Activated T-helper 1 cell treated with anti-CD3 and anti-CD28 coated beads, Interleukin-12 subunit alpha, Interleukin-12 subunit beta, Interleukin-2, Interleukin-4 antibody, amounts not matched to agents 30 ng/mL and 10 ng/mL and 1 ng/mL, durations not matched to agents 14 hours and 24 hours and 36 hours (primary cell): ENCODE measurements at regions of chr17 and their contacts with region 1.

Region 1: GRCh38 chr17:51260125-51260880 is at the start of gene UTP18:
- DNase-seq: peak; percentile 93
- H3K4me3 Mint-ChIP-seq: peak within 1 kb of the TSS; percentile 88
- H3K27ac Mint-ChIP-seq: peak within 1 kb of the TSS; percentile 97
- H3K4me1 Mint-ChIP-seq: peaks cover 60% of the 10 kb centered on the region
- H3K27me3 Mint-ChIP-seq: no peaks in the 10 kb centered on the region
- total RNA-seq, gene UTP18: 89.7 and 95.6 TPM in 2 replicates

Region 2: GRCh38 chr17:49677933-49678847 is 1582.1 kb before region 1 on chr17 and contains the start of gene SPOP:
- intact Hi-C with region 1: loop called (anchors 5 kb)
- DNase-seq: peak; percentile 99
- H3K4me3 Mint-ChIP-seq: peak within 1 kb of the TSS; percentile 91
- H3K27ac Mint-ChIP-seq: peak within 1 kb of the TSS; percentile 99
- H3K4me1 Mint-ChIP-seq: peaks cover 41% of the 10 kb centered on the region
- H3K27me3 Mint-ChIP-seq: peaks cover 5% of the 10 kb centered on the region
- total RNA-seq, gene SPOP: 58.3 and 61.9 TPM in 2 replicates

Region 3: DNA sequence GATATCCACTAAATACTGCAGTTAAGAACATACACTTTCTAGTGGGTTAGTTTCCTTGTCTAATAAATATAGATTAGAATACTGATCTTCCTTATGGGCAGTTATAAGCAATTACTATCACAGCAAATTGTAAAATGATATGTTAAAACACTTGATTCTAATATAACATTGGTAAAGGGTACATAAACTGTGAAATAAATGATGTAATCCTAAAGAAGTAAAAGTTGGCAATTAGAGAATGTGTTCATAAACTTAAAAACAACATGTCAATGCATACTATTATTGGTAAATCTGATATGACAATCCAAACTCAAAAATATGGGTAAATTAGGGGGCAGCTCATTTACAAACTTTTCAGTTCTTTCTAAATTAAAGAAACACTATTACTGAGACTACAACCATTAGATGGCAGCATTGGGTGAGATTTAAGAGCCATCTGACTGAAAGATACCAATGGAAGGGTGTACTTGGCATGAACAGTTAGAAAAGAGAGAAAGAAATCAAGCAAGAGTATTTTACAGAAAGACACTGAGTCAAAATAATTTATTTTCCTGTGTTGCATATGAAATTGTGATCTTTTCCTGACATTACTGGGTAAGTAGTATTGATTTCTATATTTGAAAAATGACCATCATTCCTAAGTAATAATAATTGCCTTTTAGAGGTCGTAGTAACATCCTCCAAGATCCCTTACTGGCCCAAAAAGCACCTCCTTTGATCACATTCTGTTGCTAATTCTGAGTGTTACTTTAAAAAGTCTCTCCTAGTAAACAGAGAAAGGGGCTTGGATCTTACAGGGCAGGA is 259.3 kb before region 1 on chr17:
- intact Hi-C with region 1: loop called (anchors 5 kb)
- DNase-seq: no peak
- H3K4me3 Mint-ChIP-seq: no peak overlapping the region
- H3K27ac Mint-ChIP-seq: no peak overlapping the region
- H3K4me1 Mint-ChIP-seq: peaks cover 7% of the 10 kb centered on the region
- H3K27me3 Mint-ChIP-seq: no peaks in the 10 kb centered on the region

Region 4: DNA sequence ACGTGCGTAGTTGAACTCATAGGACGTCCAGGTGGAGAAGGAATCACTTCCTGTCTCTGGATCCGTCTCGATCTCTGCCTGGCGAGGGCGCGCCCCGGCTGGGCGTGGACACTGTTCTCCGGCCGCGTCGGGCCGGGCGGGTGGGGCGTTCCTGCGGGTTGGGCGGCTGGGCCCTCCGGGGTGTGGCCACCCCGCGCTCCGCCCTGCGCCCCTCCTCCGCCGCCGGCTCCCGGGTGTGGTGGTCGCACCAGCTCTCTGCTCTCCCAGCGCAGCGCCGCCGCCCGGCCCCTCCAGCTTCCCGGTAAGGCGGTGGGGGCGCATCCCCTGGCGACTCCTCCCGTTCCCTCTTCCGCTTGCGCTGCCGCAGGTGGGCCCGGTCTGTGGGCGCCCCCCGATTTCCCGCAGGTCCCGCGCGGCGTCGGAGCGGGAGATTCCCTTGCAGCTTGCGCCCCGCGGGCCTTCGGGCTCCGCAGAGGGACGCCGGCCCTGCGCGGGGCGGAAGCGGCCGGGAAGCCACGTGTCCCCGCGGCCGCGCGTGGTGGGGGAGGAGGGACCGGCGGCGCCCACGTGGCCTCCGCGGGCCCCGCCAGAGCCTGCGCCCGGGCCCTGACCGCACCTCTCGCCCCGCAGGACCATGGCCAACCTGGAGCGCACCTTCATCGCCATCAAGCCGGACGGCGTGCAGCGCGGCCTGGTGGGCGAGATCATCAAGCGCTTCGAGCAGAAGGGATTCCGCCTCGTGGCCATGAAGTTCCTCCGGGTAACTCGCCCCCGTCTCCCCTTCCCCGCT is 93.9 kb before region 1 on chr17 and contains the start of gene NME2:
- intact Hi-C with region 1: loop called (anchors 1 kb)
- DNase-seq: peak; percentile 69
- H3K4me3 Mint-ChIP-seq: peak within 1 kb of the TSS; percentile 98
- H3K27ac Mint-ChIP-seq: peak within 1 kb of the TSS; percentile 98
- H3K4me1 Mint-ChIP-seq: peaks cover 32% of the 10 kb centered on the region
- H3K27me3 Mint-ChIP-seq: peaks cover 1% of the 10 kb centered on the region
- total RNA-seq, gene NME2: 664 and 674 TPM in 2 replicates

Region 5: DNA sequence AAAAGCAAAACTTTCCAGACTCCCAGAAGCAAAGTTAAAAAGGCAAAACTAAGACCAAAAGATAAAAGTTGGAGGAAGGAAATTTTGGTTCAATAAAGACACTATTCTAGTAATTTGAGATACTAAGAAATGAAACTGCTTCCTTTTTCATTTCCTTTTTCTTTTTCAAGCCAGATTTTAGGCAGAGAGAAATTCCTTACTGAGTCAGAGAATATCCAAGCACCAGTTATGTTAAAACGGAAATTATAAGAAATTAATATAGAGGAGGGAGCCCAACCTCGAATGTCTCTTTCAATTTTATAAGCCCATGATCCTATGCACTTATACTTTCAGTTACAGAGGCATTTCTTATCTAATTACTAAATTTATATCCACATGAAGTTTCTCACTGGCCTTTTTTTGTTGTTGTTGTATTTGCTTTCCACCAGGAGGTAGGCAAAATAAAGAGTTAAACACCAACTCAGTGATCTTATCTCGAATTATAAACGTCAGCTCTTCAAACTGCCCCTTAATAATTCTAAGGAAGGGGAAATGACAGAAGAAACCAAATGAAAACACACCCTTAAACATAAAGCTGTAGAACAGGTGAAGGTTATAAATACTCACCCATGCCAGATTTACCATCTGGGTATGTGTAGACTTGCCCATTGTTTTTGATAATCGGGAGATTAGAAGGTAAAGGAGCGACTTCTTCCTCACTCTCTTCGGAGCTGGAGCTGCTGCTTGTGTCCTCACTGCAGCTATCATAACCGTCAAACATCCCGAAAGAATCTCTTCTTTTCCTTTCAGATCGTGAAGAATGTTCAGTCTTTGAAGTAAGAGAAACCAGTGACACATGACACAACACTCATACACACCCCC is 35.7 kb before region 1 on chr17:
- intact Hi-C with region 1: no loop called
- DNase-seq: no peak
- H3K4me3 Mint-ChIP-seq: no peak overlapping the region
- H3K27ac Mint-ChIP-seq: peak overlapping the region; percentile 50
- H3K4me1 Mint-ChIP-seq: peaks cover 19% of the 10 kb centered on the region
- H3K27me3 Mint-ChIP-seq: no peaks in the 10 kb centered on the region

Region 6: GRCh38 chr17:51427856-51428255 is 167.6 kb after region 1 on chr17:
- intact Hi-C with region 1: loop called (anchors 1 kb)
- DNase-seq: peak; percentile 77
- H3K4me3 Mint-ChIP-seq: peak overlapping the region; percentile 60
- H3K27ac Mint-ChIP-seq: peak overlapping the region; percentile 89
- H3K4me1 Mint-ChIP-seq: peaks cover 62% of the 10 kb centered on the region
- H3K27me3 Mint-ChIP-seq: no peaks in the 10 kb centered on the region